ENCODE measurements at regions of chr1 and their contacts with region 1.

Region 1: DNA sequence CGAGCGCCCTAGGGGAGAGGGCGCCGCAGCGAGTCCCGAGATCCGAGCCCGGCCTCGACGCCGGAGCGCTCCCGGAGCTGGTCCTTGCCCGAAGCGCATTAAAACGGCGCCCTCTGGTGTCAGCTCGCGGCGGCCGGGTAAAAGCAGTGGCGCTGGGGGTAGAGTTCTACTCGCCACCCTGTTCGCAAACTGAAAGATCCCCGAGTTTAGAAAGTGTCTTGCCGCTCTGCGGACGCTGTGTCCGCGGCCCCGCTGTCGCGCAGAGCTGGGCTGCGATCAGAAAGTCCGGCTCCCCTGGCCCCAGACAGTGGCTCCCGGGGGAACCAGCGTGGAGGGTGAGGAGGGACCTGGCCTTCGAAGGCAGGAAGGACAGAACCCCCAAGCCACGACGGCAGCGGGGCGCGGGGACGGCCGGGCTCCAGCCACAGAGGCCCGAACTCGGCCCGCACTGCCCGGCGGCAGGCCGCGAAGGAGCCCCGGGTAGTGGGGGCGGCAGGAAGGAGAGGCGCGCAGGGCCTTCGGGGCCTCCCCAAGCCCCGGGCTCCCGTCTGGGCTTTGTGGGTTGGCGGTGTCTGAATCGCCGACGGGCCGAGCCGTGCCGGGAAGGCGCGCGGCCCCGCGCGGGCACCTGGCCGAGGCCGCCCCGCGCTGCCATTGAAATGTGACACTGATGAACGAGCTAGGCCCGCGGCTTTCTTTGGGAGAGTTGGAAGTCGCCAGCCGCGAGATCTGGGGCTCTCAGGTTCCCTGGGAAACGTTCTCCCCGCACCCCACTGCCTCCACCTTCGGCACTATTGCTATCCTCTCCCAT is 39.1 kb upstream of the NFIA start:
- DNase-seq: peak; percentile 95
- H3K4me3 Mint-ChIP-seq: peak overlapping the region; percentile 49
- H3K27ac Mint-ChIP-seq: no peak overlapping the region
- H3K4me1 Mint-ChIP-seq: no peaks in the 10 kb centered on the region
- H3K27me3 Mint-ChIP-seq: peaks cover 58% of the 10 kb centered on the region

Region 2: GRCh38 chr1:59971464-59971911 is 1071.7 kb before region 1 on chr1:
- intact Hi-C with region 1: loop called (anchors 2 kb)
- DNase-seq: peak; percentile 82
- H3K4me3 Mint-ChIP-seq: no peak overlapping the region
- H3K27ac Mint-ChIP-seq: no peak overlapping the region
- H3K4me1 Mint-ChIP-seq: peaks cover 3% of the 10 kb centered on the region
- H3K27me3 Mint-ChIP-seq: peaks cover 12% of the 10 kb centered on the region

Region 3: GRCh38 chr1:60848583-60849188 is 194.5 kb before region 1 on chr1:
- intact Hi-C with region 1: loop called (anchors 5 kb)
- DNase-seq: no peak
- H3K4me3 Mint-ChIP-seq: no peak overlapping the region
- H3K27ac Mint-ChIP-seq: no peak overlapping the region
- H3K4me1 Mint-ChIP-seq: no peaks in the 10 kb centered on the region
- H3K27me3 Mint-ChIP-seq: peaks cover 11% of the 10 kb centered on the region

Region 4: DNA sequence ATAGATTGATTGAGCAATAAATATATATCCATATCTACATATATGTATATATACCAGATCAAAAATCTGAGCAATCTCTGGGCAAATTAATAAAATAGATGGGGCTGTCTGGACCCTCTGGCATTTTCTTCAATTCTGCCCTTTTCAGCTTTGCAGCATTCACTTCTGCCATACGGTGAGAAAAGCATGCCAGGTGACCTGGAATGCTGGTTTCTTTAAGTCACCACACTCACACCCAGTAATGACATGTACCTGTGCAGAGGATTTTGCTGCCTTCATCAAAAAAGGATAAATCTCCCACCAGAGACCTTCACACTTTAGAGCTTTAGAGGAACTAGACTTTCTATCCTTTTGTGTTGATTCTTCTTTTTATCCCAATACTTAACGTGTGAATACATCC is 184.1 kb before region 1 on chr1:
- intact Hi-C with region 1: no loop called
- DNase-seq: no peak
- H3K4me3 Mint-ChIP-seq: no peak overlapping the region
- H3K27ac Mint-ChIP-seq: no peak overlapping the region
- H3K4me1 Mint-ChIP-seq: no peaks in the 10 kb centered on the region
- H3K27me3 Mint-ChIP-seq: peaks cover 7% of the 10 kb centered on the region

Region 5: GRCh38 chr1:60978421-60979357 is 64.5 kb before region 1 on chr1:
- intact Hi-C with region 1: loop called (anchors 1 kb)
- DNase-seq: peak; percentile 66
- H3K4me3 Mint-ChIP-seq: no peak overlapping the region
- H3K27ac Mint-ChIP-seq: no peak overlapping the region
- H3K4me1 Mint-ChIP-seq: no peaks in the 10 kb centered on the region
- H3K27me3 Mint-ChIP-seq: peaks cover 3% of the 10 kb centered on the region

Region 6: DNA sequence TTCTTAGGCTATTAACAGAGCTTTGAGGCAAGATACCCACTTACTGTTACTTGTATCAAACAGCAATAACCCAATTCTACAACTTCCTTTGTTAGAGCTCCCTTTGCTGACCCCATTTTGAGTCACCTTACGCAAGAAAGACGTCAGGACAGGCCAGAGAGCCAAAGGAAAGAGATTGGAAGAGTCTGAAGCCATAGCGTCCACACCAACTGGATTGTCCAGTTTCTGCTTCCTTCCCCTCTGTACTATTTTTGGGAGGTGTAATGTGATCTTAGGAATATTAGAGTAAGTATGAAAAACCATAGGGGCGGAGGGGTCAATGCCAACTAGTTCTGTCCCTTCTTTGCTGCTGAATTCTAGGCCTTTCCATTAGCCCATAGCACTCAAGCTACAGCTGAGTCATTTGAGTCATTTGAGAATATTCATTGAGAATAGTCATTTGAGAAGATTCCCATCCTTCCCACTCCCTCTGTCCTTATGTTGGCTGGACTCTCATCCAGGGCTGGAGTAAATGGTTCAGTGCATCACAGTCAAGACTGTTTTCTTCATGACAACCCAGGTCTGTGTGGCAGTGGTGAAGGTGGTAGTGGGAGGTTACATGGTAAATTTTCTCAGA is 24.3 kb after region 1 on chr1:
- intact Hi-C with region 1: no loop called
- DNase-seq: no peak
- H3K4me3 Mint-ChIP-seq: no peak overlapping the region
- H3K27ac Mint-ChIP-seq: no peak overlapping the region
- H3K4me1 Mint-ChIP-seq: no peaks in the 10 kb centered on the region
- H3K27me3 Mint-ChIP-seq: peaks cover 36% of the 10 kb centered on the region

Measured in activated CD4-positive, alpha-beta T cell treated with anti-CD3 and anti-CD28 coated beads, Interleukin-2, amount 10 ng/mL, durations not matched to agents 24 days and 14 days (primary cell).